ENCODE measurements at regions of chr15 and their contacts with region 1.

Region 1: DNA sequence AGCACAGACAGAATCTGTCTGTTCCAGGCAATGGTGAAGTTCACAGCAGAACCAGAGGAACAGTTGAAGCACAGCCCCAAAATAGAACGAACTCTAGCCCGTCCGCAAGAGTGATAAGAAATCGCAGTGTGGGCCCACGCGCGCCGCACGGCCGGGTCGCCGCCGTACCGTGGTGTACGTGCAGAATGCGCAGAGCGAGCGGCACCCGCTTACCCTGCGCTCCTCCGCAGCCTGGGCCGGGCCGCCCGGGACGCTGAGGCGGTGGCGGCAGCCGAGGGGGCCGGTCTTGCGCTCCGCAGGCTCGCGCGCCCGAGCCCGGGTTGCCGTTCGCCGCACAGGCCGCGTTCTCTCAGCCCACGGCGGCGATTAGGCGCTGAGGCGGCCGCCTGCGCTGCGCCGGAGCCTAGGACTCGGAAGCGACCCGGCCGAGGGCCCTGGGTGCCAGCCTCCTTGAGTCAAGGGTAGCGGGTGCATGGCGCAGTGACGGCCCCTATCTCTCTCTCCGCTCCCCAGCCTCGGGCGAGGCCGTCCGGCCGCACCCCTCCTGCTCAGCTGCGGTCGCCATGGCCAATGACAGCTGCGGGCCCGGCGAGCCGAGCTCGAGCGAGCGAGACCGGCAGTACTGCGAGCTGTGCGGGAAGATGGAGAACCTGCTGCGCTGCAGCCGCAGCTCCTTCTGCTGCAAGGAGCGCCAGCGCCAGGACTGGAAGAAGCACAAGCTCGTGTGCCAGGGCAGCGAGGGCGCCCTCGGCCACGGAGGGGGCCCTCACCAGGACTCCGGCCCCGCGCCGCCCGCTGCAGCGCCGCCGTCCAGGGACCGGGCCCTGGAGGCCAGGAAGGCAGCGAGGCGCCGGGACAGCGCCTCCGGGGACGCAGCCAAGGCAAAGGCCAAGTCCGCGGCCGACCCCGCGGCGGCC is 20.5 kb downstream of the WDR73 start:
- DNase-seq: peak; percentile 51 to 70
- H3K4me3 ChIP-seq: peak overlapping the region; percentile 58 to 77 (median 69)
- H3K27ac ChIP-seq: peak overlapping the region; percentile 84 to 95
- H3K4me1 ChIP-seq: peaks cover 11 to 14% of the 10 kb centered on the region in 2 donors
- H3K27me3 ChIP-seq: no peaks in the 10 kb centered on the region
- CTCF ChIP-seq: no peak
- POLR2A ChIP-seq: no peak

Region 2: GRCh38 chr15:84621358-84621979 is 12.1 kb before region 1 on chr15:
- intact Hi-C with region 1: loop called (anchors 2 kb)
- DNase-seq: peak in 1 of 2 donors; percentile 25
- H3K4me3 ChIP-seq: peak overlapping the region in 1 of 3 donors; percentile 15
- H3K27ac ChIP-seq: no peak overlapping the region
- H3K4me1 ChIP-seq: no peaks in the 10 kb centered on the region
- H3K27me3 ChIP-seq: no peaks in the 10 kb centered on the region
- CTCF ChIP-seq: no peak
- POLR2A ChIP-seq: no peak

Region 3: DNA sequence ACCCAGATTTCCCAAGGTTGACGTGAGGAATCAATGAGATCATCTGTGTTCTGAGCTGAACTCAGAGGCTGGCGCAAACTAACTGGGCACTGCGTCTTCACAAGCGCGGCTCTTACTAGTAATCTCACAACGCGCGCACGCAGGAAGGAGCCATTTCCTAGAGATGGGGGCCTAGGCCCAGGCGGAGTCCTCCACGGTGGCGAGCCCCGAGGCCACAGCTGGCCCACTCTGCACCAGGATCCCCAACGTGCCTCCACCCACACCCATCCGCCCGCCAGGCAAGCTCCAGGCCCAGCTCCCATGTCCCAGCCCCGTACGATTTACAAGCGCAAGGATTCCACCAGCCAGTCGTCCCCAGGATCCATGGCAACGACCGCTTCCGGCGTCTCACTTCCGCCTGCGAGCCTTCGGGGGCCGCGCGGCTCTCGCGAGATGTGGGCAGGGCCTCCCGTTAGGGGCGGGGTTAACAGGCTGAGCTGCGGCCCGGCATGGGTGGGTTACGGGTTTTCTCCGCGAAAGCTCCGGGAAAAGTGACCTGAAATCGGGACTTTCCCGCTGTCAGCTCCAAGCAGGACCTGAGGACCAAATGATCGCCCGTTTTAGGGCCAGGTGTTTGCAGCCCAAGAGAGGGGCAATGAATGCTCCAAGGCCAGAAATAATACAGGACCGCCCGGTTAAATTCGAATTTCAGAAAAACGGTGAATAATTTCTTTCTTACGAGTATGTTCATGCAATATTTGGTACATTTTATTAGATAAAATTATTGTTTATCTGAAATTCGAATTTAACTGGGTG is 20.5 kb after region 1 on chr15 and contains the start of gene WDR73:
- intact Hi-C with region 1: loop called (anchors 1 kb)
- DNase-seq: peak; percentile 95 to 96
- H3K4me3 ChIP-seq: peak within 1 kb of the TSS; percentile 68 to 95 (median 94)
- H3K27ac ChIP-seq: peak within 1 kb of the TSS; percentile 92 to 96
- H3K4me1 ChIP-seq: peaks cover 4 to 16% of the 10 kb centered on the region in 2 donors
- H3K27me3 ChIP-seq: no peaks in the 10 kb centered on the region
- CTCF ChIP-seq: no peak
- POLR2A ChIP-seq: peak; percentile 75
- total RNA-seq, gene WDR73: 13.8 to 35.0 (median 30.8) TPM

Measured in breast epithelium (tissue), 4 donors.